ENCODE measurements at regions of chr16 and their contacts with region 1.

Region 1: DNA sequence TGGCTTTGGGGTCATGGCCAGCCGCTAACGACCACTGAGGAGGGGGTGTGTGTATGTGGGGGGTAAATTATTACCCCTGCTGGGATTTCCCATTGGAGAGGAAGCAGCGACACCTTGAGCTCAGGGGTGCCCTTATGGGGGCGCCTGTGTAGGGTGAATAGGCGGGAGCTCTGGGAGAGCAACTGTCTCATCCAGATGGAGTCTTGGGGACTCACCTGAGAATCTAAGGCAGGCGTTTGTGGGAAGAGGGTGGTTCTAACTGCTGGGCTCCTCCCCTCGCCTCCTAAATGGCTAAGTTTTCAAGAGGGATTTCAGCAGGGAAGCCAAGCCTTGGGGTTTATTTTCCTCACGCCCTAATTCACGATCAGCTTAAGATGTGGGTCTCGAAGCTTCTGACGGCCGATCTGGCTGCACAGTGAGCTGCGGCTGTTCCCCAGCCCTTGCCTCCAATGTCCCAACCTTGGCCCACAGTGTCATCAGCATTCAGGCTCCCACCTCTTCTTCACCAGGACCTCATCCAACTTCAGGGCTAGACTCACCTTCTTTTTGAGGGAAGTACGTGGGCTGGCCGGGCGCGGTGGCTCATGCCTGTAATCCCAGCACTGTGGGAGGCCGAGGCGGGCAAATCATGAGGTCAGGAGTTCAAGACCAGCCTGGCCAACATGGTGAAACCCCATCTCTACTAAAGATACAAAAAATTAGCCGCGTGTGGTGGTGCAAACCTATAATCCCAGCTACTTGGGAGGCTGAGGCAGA is 136.9 kb upstream of the EEF2KMT start:
- DNase-seq: no peak
- H3K4me3 ChIP-seq: no peak overlapping the region
- H3K27ac ChIP-seq: no peak overlapping the region
- H3K4me1 ChIP-seq: no peaks in the 10 kb centered on the region
- H3K27me3 ChIP-seq: no peaks in the 10 kb centered on the region
- CTCF ChIP-seq: no peak
- EP300 ChIP-seq: no peak
- POLR2A ChIP-seq: no peak

Region 2: DNA sequence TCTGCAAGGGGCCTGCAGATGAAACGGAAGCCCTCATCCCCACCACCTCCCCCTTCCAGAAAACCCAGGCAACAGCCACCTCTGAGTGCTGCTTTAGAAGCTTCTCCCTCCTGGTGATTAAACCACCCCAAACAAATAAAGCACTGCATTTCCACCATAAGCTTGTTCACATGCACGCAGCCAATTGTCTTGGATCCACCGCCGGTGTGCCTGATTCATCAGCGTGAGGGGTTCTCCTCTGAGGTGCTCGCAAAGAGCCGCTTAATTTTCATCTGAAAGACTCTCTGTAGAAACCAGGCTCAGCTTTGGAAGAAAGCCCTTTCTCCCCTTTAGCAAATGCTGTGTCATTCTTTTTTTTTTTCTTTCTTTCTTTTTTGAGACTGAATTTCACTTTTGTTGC is 18.3 kb after region 1 on chr16:
- intact Hi-C with region 1: loop called in 1 of 4 experiments (anchors 1 kb)
- DNase-seq: no peak
- H3K4me3 ChIP-seq: no peak overlapping the region
- H3K27ac ChIP-seq: no peak overlapping the region
- H3K4me1 ChIP-seq: no peaks in the 10 kb centered on the region
- H3K27me3 ChIP-seq: no peaks in the 10 kb centered on the region
- CTCF ChIP-seq: no peak
- EP300 ChIP-seq: no peak
- POLR2A ChIP-seq: no peak

Region 3: GRCh38 chr16:6643080-6643686 is 1408.7 kb after region 1 on chr16:
- intact Hi-C with region 1: loop called in 1 of 4 experiments (anchors 10 kb)
- DNase-seq: peak in 4 of 5 donors; percentile 15 to 26 (median 18)
- H3K4me3 ChIP-seq: no peak overlapping the region
- H3K27ac ChIP-seq: no peak overlapping the region
- H3K4me1 ChIP-seq: no peaks in the 10 kb centered on the region
- H3K27me3 ChIP-seq: no peaks in the 10 kb centered on the region
- CTCF ChIP-seq: peak; percentile 27 to 62 (median 57)
- EP300 ChIP-seq: no peak
- POLR2A ChIP-seq: no peak